Panc1 (cell line): ENCODE measurements at regions of chr1 and their contacts with region 1.

Region 1: GRCh38 chr1:115595279-115596079 is 46.3 kb upstream of the VANGL1 start:
- DNase-seq: peak; percentile 54
- ATAC-seq: peak; percentile 95
- H3K4me3 ChIP-seq: no peak overlapping the region
- H3K27ac ChIP-seq: no peak overlapping the region
- H3K4me1 ChIP-seq: no peaks in the 10 kb centered on the region
- H3K27me3 ChIP-seq: no peaks in the 10 kb centered on the region
- CTCF ChIP-seq: peak; percentile 85

Region 2: DNA sequence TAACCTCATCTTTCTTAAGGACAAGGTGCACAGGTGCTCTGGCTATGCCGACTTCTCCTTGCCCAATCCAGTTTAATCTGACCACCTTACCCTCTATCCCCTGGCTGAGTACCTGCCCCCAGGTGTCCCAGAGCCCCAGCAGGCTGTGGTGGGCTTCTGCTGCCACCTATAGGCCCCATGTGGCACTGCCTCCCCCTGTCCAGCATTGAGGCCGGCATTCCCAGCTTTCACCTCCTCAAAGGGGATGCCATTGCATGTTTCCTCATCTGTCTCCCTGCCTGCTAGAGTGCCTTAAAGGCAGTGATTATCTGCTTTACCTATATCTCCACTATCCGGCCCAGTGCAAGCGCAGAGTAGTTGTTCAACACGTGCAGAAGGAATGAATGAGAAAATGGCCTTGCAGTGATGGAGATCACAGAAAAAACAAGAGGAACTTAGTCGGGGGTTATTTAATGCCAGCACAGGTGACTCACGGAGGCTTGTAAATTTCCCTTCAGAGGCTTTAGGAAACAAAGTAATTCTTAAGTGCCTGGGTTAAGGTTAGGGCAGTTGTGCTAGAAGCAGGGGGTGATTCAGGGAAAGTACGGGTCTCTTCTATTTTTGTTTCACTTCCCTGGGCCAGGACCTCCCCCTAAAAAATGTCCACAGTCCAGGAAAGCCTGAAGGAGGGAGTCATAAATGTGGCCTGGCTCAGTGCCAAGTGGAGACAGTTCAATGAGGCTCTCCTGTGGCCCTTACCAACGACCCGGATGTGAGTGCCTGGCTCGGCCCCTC is 125.6 kb before region 1 on chr1:
- CTCF ChIA-PET with region 1: no interaction called
- POLR2A ChIA-PET with region 1: no interaction called
- in situ Hi-C with region 1: no loop called
- intact Hi-C with region 1: loop called (anchors 10 kb)
- DNase-seq: peak; percentile 8
- ATAC-seq: peak; percentile 80
- H3K4me3 ChIP-seq: no peak overlapping the region
- H3K27ac ChIP-seq: no peak overlapping the region
- H3K4me1 ChIP-seq: no peaks in the 10 kb centered on the region
- H3K27me3 ChIP-seq: no peaks in the 10 kb centered on the region
- CTCF ChIP-seq: peak; percentile 87

Region 3: DNA sequence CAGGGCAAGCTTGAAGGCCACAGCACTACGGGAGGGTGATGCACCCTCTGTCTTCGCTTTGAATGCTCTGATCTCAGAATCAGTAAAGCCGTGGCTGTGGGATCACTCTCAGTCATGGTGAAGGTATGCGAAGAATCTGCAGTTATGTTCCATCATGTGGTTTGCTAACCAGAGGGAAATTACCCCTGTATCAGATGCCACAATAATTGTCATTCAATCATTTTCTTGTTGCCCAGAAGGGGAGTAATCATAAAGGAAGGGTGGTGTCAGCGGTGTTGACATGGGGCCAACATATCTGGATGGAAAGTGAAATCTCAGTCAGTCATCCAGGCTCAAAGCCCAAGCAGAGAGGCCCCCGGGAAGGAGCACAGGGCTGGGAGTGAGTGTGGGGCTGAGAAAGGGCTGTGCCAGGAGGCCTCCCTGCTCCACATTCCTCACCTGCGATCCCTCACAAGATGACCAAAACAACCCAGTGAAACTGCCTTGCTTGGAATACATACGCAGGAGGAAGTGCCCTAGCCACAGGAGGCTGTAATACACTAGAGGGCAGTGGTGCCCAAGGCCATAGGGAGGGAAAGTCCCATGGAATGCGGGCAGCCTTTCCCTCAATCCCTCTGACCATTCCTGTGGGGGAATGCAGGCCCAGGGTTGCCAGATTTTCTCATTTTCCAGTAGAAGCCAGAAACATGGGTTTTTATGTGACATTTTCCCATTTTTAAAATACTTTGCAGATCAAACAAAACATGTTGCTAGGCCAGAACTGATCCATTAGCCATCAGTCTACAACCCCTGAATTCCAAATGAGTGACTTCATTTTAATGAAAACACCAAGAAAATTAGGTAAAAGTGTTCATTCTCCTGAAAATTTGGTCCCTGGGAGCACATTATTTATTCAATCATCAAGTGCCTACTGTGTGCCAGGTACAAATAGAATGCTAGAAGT is 49.4 kb before region 1 on chr1:
- CTCF ChIA-PET with region 1: no interaction called
- POLR2A ChIA-PET with region 1: no interaction called
- in situ Hi-C with region 1: no loop called
- intact Hi-C with region 1: loop called (anchors 2 kb)
- DNase-seq: peak; percentile 27
- ATAC-seq: peak; percentile 95
- H3K4me3 ChIP-seq: peak overlapping the region in 1 of 2 experiments; percentile 23; a peak in 1 of 4 replicates
- H3K27ac ChIP-seq: peak overlapping the region; percentile 34
- H3K4me1 ChIP-seq: peaks cover 9% of the 10 kb centered on the region; the same call in 1 of the 2 replicates
- H3K27me3 ChIP-seq: no peaks in the 10 kb centered on the region
- CTCF ChIP-seq: peak; percentile 78

Region 4: GRCh38 chr1:115557715-115558114 is 37.8 kb before region 1 on chr1:
- CTCF ChIA-PET with region 1: no interaction called
- POLR2A ChIA-PET with region 1: no interaction called
- in situ Hi-C with region 1: no loop called
- intact Hi-C with region 1: no loop called
- DNase-seq: no peak
- ATAC-seq: no peak
- H3K4me3 ChIP-seq: no peak overlapping the region
- H3K27ac ChIP-seq: no peak overlapping the region
- H3K4me1 ChIP-seq: no peaks in the 10 kb centered on the region
- H3K27me3 ChIP-seq: no peaks in the 10 kb centered on the region; the same call in 1 of the 2 replicates
- CTCF ChIP-seq: no peak

Region 5: DNA sequence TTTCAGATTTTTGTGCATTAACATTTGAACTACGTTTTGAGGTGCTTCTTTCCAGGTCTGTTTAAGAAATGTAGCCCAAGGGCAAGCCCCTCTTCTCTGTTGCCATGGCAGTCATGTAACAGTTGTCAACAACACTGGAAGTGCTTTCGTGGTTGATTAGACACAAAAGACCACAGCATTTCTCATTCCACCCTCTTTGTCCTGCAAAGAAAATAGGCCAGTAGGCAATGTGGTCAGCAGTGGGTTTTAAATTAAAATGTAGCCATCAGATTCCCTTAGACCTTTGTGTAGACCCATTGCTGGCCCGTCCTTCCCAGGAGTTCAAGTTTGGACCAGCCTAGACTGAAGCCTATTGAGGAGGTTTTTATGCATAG is 81.7 kb after region 1 on chr1:
- CTCF ChIA-PET with region 1: no interaction called
- POLR2A ChIA-PET with region 1: no interaction called
- in situ Hi-C with region 1: no loop called
- intact Hi-C with region 1: no loop called
- DNase-seq: no peak
- ATAC-seq: no peak
- H3K4me3 ChIP-seq: no peak overlapping the region
- H3K27ac ChIP-seq: no peak overlapping the region
- H3K4me1 ChIP-seq: no peaks in the 10 kb centered on the region; the same call in none of the 2 replicates
- H3K27me3 ChIP-seq: no peaks in the 10 kb centered on the region
- CTCF ChIP-seq: no peak